ENCODE measurements at regions of chr3 and their contacts with region 1.

Region 1: GRCh38 chr3:179653096-179653797 is 407 bp downstream of the USP13 start:
- DNase-seq: peak; percentile 78
- ATAC-seq: peak; percentile 41
- H3K4me3 ChIP-seq: peak overlapping the region; percentile 41 to 88 (median 80)
- H3K4me3 Mint-ChIP-seq: peak overlapping the region; percentile 96
- H3K27ac ChIP-seq: peak overlapping the region; percentile 21 to 36
- H3K27ac Mint-ChIP-seq: peak overlapping the region; percentile 91
- H3K4me1 ChIP-seq: peaks cover 10 to 19% of the 10 kb centered on the region in 2 donors
- H3K4me1 Mint-ChIP-seq: peaks cover 29% of the 10 kb centered on the region
- H3K27me3 ChIP-seq: no peaks in the 10 kb centered on the region
- H3K27me3 Mint-ChIP-seq: no peaks in the 10 kb centered on the region
- CTCF ChIP-seq: no peak

Region 2: GRCh38 chr3:179071550-179072397 is 581.5 kb before region 1 on chr3 and contains the start of gene ZMAT3:
- CTCF ChIA-PET with region 1: no interaction called
- POLR2A ChIA-PET with region 1: no interaction called
- intact Hi-C with region 1: loop called (anchors 5 kb)
- DNase-seq: peak; percentile 90
- ATAC-seq: peak; percentile 79
- H3K4me3 ChIP-seq: peak within 1 kb of the TSS; percentile 61 to 85 (median 80)
- H3K4me3 Mint-ChIP-seq: peak within 1 kb of the TSS; percentile 100
- H3K27ac ChIP-seq: peak within 1 kb of the TSS; percentile 89 to 92
- H3K27ac Mint-ChIP-seq: peak within 1 kb of the TSS; percentile 96
- H3K4me1 ChIP-seq: peaks cover 36 to 41% of the 10 kb centered on the region in 2 donors
- H3K4me1 Mint-ChIP-seq: peaks cover 63% of the 10 kb centered on the region
- H3K27me3 ChIP-seq: no peaks in the 10 kb centered on the region
- H3K27me3 Mint-ChIP-seq: no peaks in the 10 kb centered on the region
- CTCF ChIP-seq: no peak
- total RNA-seq, gene ZMAT3: 17.5 and 19.5 TPM in 2 replicates

Region 3: GRCh38 chr3:179347345-179348194 is 305.7 kb before region 1 on chr3 and contains the start of gene MFN1:
- CTCF ChIA-PET with region 1: interaction called, 3 read pairs
- POLR2A ChIA-PET with region 1: no interaction called
- intact Hi-C with region 1: loop called (anchors 2 kb)
- DNase-seq: peak; percentile 92
- ATAC-seq: peak; percentile 88
- H3K4me3 ChIP-seq: peak within 1 kb of the TSS; percentile 83 to 99 (median 98)
- H3K4me3 Mint-ChIP-seq: peak within 1 kb of the TSS; percentile 95
- H3K27ac ChIP-seq: peak within 1 kb of the TSS; percentile 71 to 86
- H3K27ac Mint-ChIP-seq: peak within 1 kb of the TSS; percentile 93
- H3K4me1 ChIP-seq: peaks cover 17 to 32% of the 10 kb centered on the region in 2 donors
- H3K4me1 Mint-ChIP-seq: peaks cover 28% of the 10 kb centered on the region
- H3K27me3 ChIP-seq: no peaks in the 10 kb centered on the region
- H3K27me3 Mint-ChIP-seq: no peaks in the 10 kb centered on the region
- CTCF ChIP-seq: no peak
- total RNA-seq, gene MFN1: 98.9 and 108 TPM in 2 replicates

Region 4: GRCh38 chr3:179604321-179605078 is 48.7 kb before region 1 on chr3 and contains the starts of genes MRPL47 and NDUFB5:
- CTCF ChIA-PET with region 1: interaction called, 9 read pairs
- POLR2A ChIA-PET with region 1: no interaction called
- intact Hi-C with region 1: loop called (anchors 1 kb)
- DNase-seq: peak; percentile 96
- ATAC-seq: peak; percentile 98
- H3K4me3 ChIP-seq: peak within 1 kb of the TSS; percentile 65 to 96 (median 80)
- H3K4me3 Mint-ChIP-seq: peak within 1 kb of the TSS; percentile 99
- H3K27ac ChIP-seq: peak within 1 kb of the TSS; percentile 72 to 97
- H3K27ac Mint-ChIP-seq: peak within 1 kb of the TSS; percentile 98
- H3K4me1 ChIP-seq: peaks cover 39 to 44% of the 10 kb centered on the region in 2 donors
- H3K4me1 Mint-ChIP-seq: peaks cover 51% of the 10 kb centered on the region
- H3K27me3 ChIP-seq: no peaks in the 10 kb centered on the region
- H3K27me3 Mint-ChIP-seq: no peaks in the 10 kb centered on the region
- CTCF ChIP-seq: no peak
- total RNA-seq, gene MRPL47: 20.2 and 22.0 TPM in 2 replicates
- total RNA-seq, gene NDUFB5: 52.9 and 60.2 TPM in 2 replicates

Region 5: DNA sequence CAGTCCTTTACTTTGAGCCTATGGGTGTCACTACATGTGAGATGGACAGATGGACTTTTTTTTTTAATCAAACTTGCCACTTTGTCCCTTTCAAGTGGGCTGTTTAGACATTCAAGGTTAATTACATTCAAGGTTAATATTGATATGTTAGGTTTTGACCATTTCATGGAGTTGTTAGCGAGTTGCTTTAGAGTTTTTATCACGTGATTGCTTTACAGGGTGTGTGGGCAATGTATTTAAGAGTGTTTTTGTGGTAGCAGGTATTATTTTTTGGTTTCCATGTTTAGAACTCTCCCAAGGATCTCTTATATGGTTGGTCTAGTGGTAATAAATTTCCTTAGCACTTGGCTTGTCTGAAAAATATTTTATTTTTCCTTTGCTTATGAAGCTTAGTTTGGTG is 510.5 kb after region 1 on chr3:
- CTCF ChIA-PET with region 1: no interaction called
- POLR2A ChIA-PET with region 1: no interaction called
- intact Hi-C with region 1: no loop called
- DNase-seq: no peak
- ATAC-seq: no peak
- H3K4me3 ChIP-seq: no peak overlapping the region
- H3K4me3 Mint-ChIP-seq: no peak overlapping the region
- H3K27ac ChIP-seq: no peak overlapping the region
- H3K27ac Mint-ChIP-seq: no peak overlapping the region
- H3K4me1 ChIP-seq: no peaks in the 10 kb centered on the region
- H3K4me1 Mint-ChIP-seq: no peaks in the 10 kb centered on the region
- H3K27me3 ChIP-seq: no peaks in the 10 kb centered on the region
- H3K27me3 Mint-ChIP-seq: no peaks in the 10 kb centered on the region
- CTCF ChIP-seq: no peak

Region 6: DNA sequence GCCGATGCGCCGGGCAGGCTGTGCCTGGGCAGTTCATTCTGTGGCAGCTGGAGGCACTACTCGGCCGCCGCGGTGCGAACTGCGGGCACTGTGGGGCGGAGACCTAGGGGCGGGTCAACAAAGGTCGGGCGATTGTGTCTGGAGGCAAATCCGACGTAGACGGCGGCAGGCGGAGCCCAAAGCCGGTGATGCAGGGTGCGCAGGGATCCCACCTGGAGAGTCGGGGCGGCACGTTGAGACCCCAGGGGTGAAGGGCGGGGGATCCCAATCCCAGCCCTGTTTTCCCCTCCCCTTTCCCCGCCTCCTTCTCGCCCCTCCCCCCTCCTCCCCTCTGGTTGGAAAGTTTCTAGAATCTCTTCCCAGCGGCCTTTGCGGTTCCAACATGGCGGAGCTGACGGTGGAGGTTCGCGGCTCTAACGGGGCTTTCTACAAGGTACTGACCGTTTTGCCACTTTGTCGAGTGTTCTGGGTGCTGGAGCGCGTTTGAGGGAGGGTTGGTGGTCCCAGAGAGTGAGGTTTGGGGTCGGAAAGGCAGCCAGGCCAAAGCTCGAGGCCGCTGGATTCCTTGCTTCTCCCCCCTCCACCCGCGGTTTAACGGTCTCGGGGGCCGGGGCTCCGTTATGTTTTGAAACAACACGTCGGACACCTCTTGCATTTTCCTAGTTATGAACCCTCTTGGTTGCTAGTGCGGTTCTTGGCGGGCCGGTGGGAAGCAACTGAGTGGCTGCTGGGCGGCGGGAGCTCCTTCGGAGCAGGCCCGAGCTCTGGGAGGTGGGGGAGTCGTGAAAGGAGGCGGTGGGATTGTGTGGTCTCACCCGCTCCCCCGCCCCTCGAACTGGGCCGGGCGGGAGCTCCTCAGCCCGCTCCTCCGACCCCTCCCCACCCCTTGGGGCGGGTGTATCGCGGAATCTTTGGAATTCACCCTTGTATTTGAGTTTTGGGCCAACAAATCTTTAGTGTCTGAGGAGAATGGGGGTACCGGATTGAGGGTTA is 1259.4 kb after region 1 on chr3 and contains the start of gene FXR1:
- CTCF ChIA-PET with region 1: no interaction called
- POLR2A ChIA-PET with region 1: no interaction called
- intact Hi-C with region 1: loop called (anchors 2 kb)
- DNase-seq: peak; percentile 95
- ATAC-seq: peak; percentile 90
- H3K4me3 ChIP-seq: peak within 1 kb of the TSS; percentile 67 to 99 (median 92)
- H3K4me3 Mint-ChIP-seq: peak within 1 kb of the TSS; percentile 95
- H3K27ac ChIP-seq: peak within 1 kb of the TSS; percentile 91 to 97
- H3K27ac Mint-ChIP-seq: peak within 1 kb of the TSS; percentile 97
- H3K4me1 ChIP-seq: peaks cover 22 to 27% of the 10 kb centered on the region in 2 donors
- H3K4me1 Mint-ChIP-seq: peaks cover 53% of the 10 kb centered on the region
- H3K27me3 ChIP-seq: no peaks in the 10 kb centered on the region
- H3K27me3 Mint-ChIP-seq: no peaks in the 10 kb centered on the region
- CTCF ChIP-seq: peak; percentile 72
- total RNA-seq, gene FXR1: 143 and 144 TPM in 2 replicates